ENCODE measurements at regions of chr4 and their contacts with region 1.

Region 1: DNA sequence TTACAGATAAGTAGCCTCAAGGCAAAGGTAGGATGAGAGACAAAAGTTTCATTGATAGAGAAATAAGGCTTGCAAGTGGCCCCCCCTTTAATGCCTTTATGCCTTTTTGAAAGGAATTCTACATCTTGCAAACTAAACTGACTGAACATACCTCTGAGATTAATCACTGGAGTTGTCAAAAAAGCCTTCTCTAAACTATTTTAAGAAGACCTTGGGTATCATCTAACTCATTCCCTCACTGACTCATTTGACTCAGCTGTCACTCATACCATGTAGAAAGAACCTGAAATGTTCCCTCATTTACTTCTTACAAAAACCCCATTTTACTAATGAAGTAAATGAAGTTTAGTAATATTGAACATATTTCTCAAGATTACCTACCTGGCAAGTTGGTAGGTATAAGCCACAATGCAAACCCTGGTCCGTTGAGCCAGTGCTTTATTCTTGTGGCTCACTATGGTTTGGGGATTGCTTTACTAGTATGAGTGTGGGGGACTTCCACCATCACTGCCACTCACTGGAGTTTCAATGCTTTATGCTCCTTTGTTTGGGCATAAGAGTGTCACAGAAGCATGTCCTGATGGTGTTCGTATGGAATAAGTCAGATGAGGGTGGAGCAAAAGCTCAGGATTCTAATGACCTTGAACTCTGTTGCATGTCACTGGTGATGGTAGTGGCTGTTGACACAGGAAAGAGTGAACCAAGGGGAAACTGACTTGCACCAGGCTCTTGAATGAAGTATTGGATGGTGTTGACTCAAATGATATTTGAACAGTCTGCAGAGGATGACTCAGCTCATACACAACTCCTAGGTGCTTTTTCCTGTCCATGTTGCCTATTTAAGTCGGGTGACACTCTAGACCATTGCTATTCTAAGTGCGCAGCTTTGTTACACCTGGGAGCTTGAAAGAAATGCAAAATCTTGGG is 305.5 kb upstream of the EMCN start:
- DNase-seq: peak; percentile 32
- H3K4me3 Mint-ChIP-seq: no peak overlapping the region
- H3K27ac Mint-ChIP-seq: peak overlapping the region; percentile 79
- H3K4me1 Mint-ChIP-seq: peaks cover 40% of the 10 kb centered on the region
- H3K27me3 Mint-ChIP-seq: no peaks in the 10 kb centered on the region

Region 2: DNA sequence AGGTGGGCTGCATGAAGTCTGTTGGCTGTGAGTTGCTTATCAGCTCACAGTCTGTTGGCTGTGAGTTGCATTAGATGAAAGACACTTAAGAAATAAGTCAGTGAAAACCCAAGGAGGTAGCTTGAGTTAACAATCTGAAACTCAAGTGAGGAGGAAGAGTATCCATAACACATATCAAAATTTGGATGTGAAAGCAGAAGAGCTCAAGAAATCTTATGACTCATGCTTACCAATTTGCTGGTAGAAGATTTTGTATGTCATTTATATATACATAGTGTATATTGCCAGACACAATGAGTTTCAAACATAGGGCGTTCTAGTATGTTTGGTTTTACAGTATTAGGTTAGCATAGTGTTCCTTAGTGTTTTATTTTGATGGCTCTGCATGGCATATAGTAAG is 740.5 kb before region 1 on chr4:
- intact Hi-C with region 1: loop called (anchors 1 kb)
- DNase-seq: no peak
- H3K4me3 Mint-ChIP-seq: no peak overlapping the region
- H3K27ac Mint-ChIP-seq: peak overlapping the region; percentile 67
- H3K4me1 Mint-ChIP-seq: peaks cover 58% of the 10 kb centered on the region
- H3K27me3 Mint-ChIP-seq: no peaks in the 10 kb centered on the region

Region 3: GRCh38 chr4:100609810-100610209 is 213.5 kb before region 1 on chr4:
- intact Hi-C with region 1: no loop called
- DNase-seq: no peak
- H3K4me3 Mint-ChIP-seq: no peak overlapping the region
- H3K27ac Mint-ChIP-seq: no peak overlapping the region
- H3K4me1 Mint-ChIP-seq: no peaks in the 10 kb centered on the region
- H3K27me3 Mint-ChIP-seq: no peaks in the 10 kb centered on the region

Region 4: GRCh38 chr4:100786481-100786880 is 36.8 kb before region 1 on chr4:
- intact Hi-C with region 1: no loop called
- DNase-seq: no peak
- H3K4me3 Mint-ChIP-seq: no peak overlapping the region
- H3K27ac Mint-ChIP-seq: no peak overlapping the region
- H3K4me1 Mint-ChIP-seq: no peaks in the 10 kb centered on the region
- H3K27me3 Mint-ChIP-seq: no peaks in the 10 kb centered on the region

Region 5: GRCh38 chr4:100895556-100896197 is 72.3 kb after region 1 on chr4:
- intact Hi-C with region 1: loop called (anchors 5 kb)
- DNase-seq: no peak
- H3K4me3 Mint-ChIP-seq: peak overlapping the region; percentile 67
- H3K27ac Mint-ChIP-seq: peak overlapping the region; percentile 15
- H3K4me1 Mint-ChIP-seq: peaks cover 18% of the 10 kb centered on the region
- H3K27me3 Mint-ChIP-seq: no peaks in the 10 kb centered on the region